K562 (cell line): ENCODE measurements at regions of chr15 and their contacts with region 1.

Region 1: DNA sequence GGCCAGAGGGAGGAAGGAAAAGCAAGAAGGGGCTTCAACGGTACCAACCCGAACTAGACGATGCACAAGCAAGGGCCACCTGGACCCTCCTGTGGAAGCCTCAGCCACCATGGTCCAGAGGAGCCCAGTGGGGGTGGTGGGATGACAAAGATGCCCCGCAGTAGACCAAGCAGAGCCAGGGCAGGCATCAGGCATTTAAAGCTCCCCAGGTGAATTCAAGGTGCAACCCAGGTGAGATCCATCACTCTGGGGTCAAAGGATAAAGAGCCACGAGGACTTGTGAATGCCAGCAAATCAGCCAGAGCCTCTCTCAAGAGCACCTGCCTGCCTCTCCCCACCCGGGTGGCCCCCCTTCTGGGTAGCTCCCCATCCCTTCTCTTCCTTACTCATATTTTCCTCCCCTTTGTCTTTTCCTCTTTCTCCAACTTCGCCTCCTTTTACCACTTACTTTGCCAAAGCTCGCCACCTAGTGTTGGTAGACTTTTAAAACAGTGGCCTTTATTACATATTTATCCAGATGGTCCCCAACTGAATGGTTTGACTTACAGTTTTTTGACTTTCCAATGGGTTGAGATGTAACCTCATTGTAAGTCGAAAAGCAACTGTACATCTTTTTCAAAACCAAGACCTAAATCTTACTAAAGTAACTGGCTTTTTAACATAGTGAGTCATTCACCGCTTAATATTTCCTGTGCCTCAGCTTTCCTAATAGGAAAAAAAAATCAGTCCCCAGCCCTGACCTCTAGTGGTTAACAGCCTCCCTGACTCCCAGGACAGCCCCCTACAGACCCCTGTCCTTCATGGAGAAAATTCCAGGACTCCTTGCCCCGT is 18.8 kb downstream of the PLA2G4F start:
- DNase-seq: peak in 2 of 4 experiments; percentile 44 to 65
- ATAC-seq: peak; percentile 67
- H3K4me3 ChIP-seq: no peak overlapping the region
- H3K27ac ChIP-seq: no peak overlapping the region
- H3K4me1 ChIP-seq: peaks cover 5 to 7% of the 10 kb centered on the region in 2 experiments; a peak in 3 of 5 replicates
- H3K27me3 ChIP-seq: peaks cover 0 to 34% of the 10 kb centered on the region in 2 experiments; a peak in 3 of 5 replicates
- CTCF ChIP-seq: peak; percentile 52 to 71 (median 61); a peak in 5 of 6 replicates
- EP300 ChIP-seq: no peak
- POLR2A ChIP-seq: no peak
- RAD21 ChIP-seq: peak; percentile 38 to 62; a peak in 3 of 4 replicates

Region 2: DNA sequence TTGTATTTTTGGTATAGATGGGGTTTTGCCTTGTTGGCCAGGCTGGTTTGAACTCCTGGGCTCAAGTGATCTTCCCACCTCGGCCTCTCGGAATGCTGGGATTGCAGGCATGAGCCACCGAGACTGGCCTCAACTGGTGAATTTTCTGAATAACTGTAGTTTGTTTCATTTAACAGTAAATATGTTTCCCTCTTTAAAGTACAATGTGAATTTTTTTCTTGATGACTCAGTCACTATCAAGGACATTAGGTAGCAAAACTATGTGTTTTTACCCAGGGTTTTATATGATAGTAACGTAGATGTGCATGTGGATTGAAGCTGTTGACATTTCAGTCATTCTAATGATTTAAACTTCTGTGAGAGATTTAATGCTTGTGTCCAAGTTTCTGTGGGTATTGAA is 403.6 kb before region 1 on chr15:
- CTCF ChIA-PET with region 1: no interaction called
- POLR2A ChIA-PET with region 1: no interaction called
- in situ Hi-C with region 1: no loop called
- intact Hi-C with region 1: no loop called
- DNase-seq: no peak
- ATAC-seq: no peak
- H3K4me3 ChIP-seq: no peak overlapping the region
- H3K27ac ChIP-seq: no peak overlapping the region
- H3K4me1 ChIP-seq: no peaks in the 10 kb centered on the region; a peak in 2 of 5 replicates
- H3K27me3 ChIP-seq: no peaks in the 10 kb centered on the region
- CTCF ChIP-seq: no peak
- EP300 ChIP-seq: no peak
- POLR2A ChIP-seq: no peak
- RAD21 ChIP-seq: no peak

Region 3: GRCh38 chr15:42065033-42065432 is 72.6 kb before region 1 on chr15:
- CTCF ChIA-PET with region 1: interaction called, 13 read pairs
- POLR2A ChIA-PET with region 1: no interaction called
- in situ Hi-C with region 1: loop called (anchors 5 kb)
- intact Hi-C with region 1: loop called (anchors 2 kb)
- DNase-seq: no peak
- ATAC-seq: no peak
- H3K4me3 ChIP-seq: no peak overlapping the region
- H3K27ac ChIP-seq: no peak overlapping the region
- H3K4me1 ChIP-seq: peaks cover 0 to 5% of the 10 kb centered on the region in 2 experiments; a peak in 1 of 5 replicates
- H3K27me3 ChIP-seq: peaks cover 7 to 71% of the 10 kb centered on the region in 2 experiments
- CTCF ChIP-seq: no peak
- EP300 ChIP-seq: no peak
- POLR2A ChIP-seq: no peak
- RAD21 ChIP-seq: no peak

Region 4: GRCh38 chr15:42084460-42085235 is 53.0 kb before region 1 on chr15:
- CTCF ChIA-PET with region 1: interaction called, 4 read pairs
- POLR2A ChIA-PET with region 1: interaction called, 3 read pairs
- in situ Hi-C with region 1: no loop called
- intact Hi-C with region 1: loop called (anchors 5 kb)
- DNase-seq: peak; percentile 77 to 83 (median 80)
- ATAC-seq: peak; percentile 96
- H3K4me3 ChIP-seq: no peak overlapping the region
- H3K27ac ChIP-seq: no peak overlapping the region
- H3K4me1 ChIP-seq: peaks cover 0 to 20% of the 10 kb centered on the region in 2 experiments; a peak in 3 of 5 replicates
- H3K27me3 ChIP-seq: peaks cover 33 to 83% of the 10 kb centered on the region in 2 experiments
- CTCF ChIP-seq: peak; percentile 91 to 97 (median 91)
- EP300 ChIP-seq: no peak
- POLR2A ChIP-seq: no peak
- RAD21 ChIP-seq: peak; percentile 61 to 83

Region 5: DNA sequence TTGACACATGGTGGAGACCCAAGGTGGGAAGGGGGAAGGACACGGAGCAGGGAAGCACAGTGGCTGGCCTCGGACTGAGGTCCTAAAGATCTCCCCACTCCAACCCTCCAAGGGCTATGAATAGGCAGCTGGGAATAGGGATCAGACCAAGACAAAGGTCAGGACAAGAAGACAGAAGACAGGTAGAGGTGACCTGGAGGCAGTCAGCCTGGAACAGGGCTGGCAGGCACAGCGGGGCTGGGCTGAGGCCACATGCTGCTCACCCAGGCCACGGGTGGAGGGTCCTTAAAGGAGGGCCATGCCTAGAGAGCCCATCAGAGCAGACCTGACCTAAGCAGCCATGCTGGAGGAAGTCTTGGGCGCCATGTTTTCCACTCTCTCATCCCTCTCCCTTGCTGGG is 40.6 kb before region 1 on chr15:
- CTCF ChIA-PET with region 1: interaction called, 3 read pairs
- POLR2A ChIA-PET with region 1: no interaction called
- in situ Hi-C with region 1: no loop called
- intact Hi-C with region 1: loop called (anchors 5 kb)
- DNase-seq: no peak
- ATAC-seq: no peak
- H3K4me3 ChIP-seq: no peak overlapping the region
- H3K27ac ChIP-seq: no peak overlapping the region
- H3K4me1 ChIP-seq: no peaks in the 10 kb centered on the region; a peak in 1 of 5 replicates
- H3K27me3 ChIP-seq: peaks cover 10 to 50% of the 10 kb centered on the region in 2 experiments; a peak in 4 of 5 replicates
- CTCF ChIP-seq: no peak
- EP300 ChIP-seq: no peak
- POLR2A ChIP-seq: no peak
- RAD21 ChIP-seq: no peak

Region 6: DNA sequence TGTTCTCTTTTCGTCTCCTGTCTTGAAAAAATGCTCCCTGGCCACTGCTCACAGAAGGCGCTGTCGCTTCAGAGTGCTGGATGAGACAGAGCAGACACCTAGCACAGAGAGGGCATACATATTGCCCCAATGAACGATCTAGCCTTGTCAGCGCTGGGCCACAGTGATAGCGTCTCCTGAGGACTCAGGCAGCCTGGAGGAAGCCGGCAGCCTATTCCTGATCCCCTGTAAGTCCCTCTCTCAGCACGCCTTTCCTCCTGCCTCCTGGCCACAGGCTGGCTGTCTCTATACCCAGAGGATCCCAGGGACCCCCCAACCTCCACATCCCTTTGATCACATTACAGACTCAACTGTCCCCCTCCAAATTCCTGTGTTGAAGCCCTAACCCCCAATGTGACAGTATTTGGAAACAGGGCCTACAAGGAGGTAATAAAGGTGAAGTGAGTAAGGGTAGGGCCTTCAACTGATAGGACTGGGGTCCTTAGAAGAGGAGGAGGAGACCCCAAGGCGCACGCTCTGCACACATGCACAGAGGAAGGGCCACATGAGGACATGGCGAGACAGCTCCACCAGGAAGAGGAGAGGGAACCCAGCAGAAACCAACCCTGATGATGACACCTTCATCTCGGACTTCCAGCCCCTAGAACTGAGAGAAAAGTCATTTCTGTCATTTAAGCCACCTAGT is 11.3 kb after region 1 on chr15:
- CTCF ChIA-PET with region 1: no interaction called
- POLR2A ChIA-PET with region 1: no interaction called
- in situ Hi-C with region 1: no loop called
- intact Hi-C with region 1: no loop called
- DNase-seq: peak in 1 of 4 experiments; percentile 13
- ATAC-seq: peak; percentile 52
- H3K4me3 ChIP-seq: no peak overlapping the region
- H3K27ac ChIP-seq: no peak overlapping the region
- H3K4me1 ChIP-seq: peaks cover 0 to 22% of the 10 kb centered on the region in 2 experiments; a peak in 3 of 5 replicates
- H3K27me3 ChIP-seq: peaks cover 17 to 54% of the 10 kb centered on the region in 2 experiments; a peak in 4 of 5 replicates
- CTCF ChIP-seq: no peak
- EP300 ChIP-seq: no peak
- POLR2A ChIP-seq: no peak
- RAD21 ChIP-seq: no peak

Region 7: GRCh38 chr15:42385206-42385979 is 247.7 kb after region 1 on chr15:
- CTCF ChIA-PET with region 1: no interaction called
- POLR2A ChIA-PET with region 1: no interaction called
- in situ Hi-C with region 1: loop called (anchors 10 kb)
- intact Hi-C with region 1: loop called (anchors 5 kb)
- DNase-seq: peak; percentile 67 to 78 (median 72)
- ATAC-seq: peak; percentile 94
- H3K4me3 ChIP-seq: no peak overlapping the region
- H3K27ac ChIP-seq: no peak overlapping the region
- H3K4me1 ChIP-seq: peaks cover 15 to 16% of the 10 kb centered on the region in 2 experiments; a peak in 4 of 5 replicates
- H3K27me3 ChIP-seq: peaks cover 0 to 6% of the 10 kb centered on the region in 2 experiments; a peak in 2 of 5 replicates
- CTCF ChIP-seq: peak; percentile 84 to 92 (median 91)
- EP300 ChIP-seq: no peak
- POLR2A ChIP-seq: no peak
- RAD21 ChIP-seq: peak; percentile 63 to 82